ENCODE measurements at regions of chr1 and their contacts with region 1.

Region 1: DNA sequence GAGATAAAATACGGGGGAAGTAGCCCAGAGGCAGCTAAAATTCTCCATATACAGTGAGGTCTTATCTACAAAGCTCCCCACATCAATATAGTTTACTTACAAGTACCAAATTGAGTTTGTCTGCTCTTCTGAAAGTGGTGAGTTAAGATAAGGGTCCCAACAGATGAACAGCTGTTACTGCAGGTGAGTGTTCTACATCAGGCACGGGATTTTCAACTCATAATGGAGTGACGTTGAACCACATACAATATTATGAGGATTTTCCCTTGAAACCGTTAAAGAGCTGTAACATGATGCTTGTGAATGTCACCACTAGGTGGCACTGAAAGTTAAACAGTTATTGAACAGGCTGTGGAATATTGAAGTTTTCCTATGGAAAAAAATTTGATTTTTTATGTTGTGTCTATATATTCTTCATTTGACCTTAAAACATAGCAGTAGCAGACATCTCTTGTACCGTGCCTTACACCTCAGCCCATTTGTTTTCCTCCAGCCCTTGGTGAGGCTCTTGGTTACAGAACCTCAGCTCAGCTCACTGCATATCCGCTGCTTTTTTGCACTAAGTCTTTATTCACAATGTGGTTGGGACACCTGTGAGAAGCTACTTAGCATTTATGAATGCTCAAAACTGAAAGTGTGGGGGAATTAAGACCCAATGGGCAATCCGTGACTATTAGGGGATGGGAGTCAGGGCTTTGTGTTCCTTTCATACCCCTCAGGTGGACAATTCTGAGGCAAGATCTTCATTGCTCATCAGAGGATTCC is 23.2 kb downstream of the CD1D start:
- DNase-seq: peak; percentile 40
- H3K4me3 ChIP-seq: no peak overlapping the region
- H3K27ac ChIP-seq: no peak overlapping the region
- H3K4me1 ChIP-seq: no peaks in the 10 kb centered on the region
- H3K27me3 ChIP-seq: no peaks in the 10 kb centered on the region
- CTCF ChIP-seq: peak; percentile 70

Region 2: DNA sequence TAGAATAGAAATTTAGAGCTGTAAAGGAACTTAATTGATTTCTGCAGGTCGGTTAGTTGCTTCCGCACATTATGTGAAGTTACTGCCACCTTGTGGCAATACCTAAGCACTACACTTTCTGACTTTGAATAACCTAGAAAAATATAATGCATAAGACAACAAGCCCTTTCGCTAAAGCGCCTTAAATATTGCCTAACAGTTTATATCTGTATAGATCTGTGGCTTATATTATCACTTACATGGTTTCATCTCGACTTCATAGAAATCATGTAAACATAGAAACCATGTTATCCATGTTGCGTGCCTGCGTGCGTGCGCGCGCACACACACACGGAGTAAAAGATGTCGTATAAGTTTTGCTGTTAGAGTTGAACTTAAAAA is 794.9 kb after region 1 on chr1:
- intact Hi-C with region 1: loop called (anchors 2 kb)
- DNase-seq: peak; percentile 51
- H3K4me3 ChIP-seq: peak overlapping the region; percentile 20
- H3K27ac ChIP-seq: peak overlapping the region; percentile 73
- H3K4me1 ChIP-seq: no peaks in the 10 kb centered on the region
- H3K27me3 ChIP-seq: no peaks in the 10 kb centered on the region
- CTCF ChIP-seq: peak; percentile 85

Region 3: DNA sequence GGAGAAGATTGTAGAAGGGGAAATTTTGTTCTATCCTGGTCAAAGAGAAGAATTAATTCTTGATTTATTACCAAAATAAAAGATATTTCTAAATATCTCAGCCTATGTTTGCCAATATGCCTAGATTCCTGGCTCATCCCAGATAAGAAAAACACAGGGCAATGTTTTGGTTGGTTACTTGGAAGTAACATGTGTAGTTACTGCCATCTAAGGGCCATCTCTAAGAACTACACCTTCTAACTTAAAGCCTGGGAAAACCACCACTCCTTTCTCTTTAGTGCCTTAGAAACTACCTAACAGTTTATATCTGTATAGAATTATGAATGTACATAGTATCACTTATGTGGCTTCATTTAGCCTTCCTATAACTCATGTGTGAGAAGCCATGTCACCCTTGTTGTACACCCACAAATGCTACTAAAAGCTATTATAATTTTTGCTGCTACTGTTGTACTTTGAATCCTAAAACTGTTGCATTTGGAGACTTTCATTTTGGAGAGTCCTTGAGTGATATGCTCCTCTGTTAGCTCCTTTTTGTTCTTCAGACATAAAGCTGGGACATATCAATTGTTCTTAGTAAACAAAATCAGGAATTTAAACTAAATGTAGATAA is 868.2 kb after region 1 on chr1:
- intact Hi-C with region 1: loop called (anchors 2 kb)
- DNase-seq: no peak
- H3K4me3 ChIP-seq: no peak overlapping the region
- H3K27ac ChIP-seq: no peak overlapping the region
- H3K4me1 ChIP-seq: no peaks in the 10 kb centered on the region
- H3K27me3 ChIP-seq: no peaks in the 10 kb centered on the region
- CTCF ChIP-seq: peak; percentile 68